Activated T-helper 1 cell treated with anti-CD3 and anti-CD28 coated beads, Interleukin-12 subunit alpha, Interleukin-12 subunit beta, Interleukin-2, Interleukin-4 antibody, amounts not matched to agents 30 ng/mL and 10 ng/mL and 1 ng/mL, durations not matched to agents 14 hours and 24 hours and 36 hours (primary cell): ENCODE measurements at regions of chr6 and their contacts with region 1.

Region 1: GRCh38 chr6:31958741-31959739 is at the starts of genes NELFE and SKIC2:
- DNase-seq: peak; percentile 99
- H3K4me3 Mint-ChIP-seq: peak within 1 kb of the TSS; percentile 98
- H3K27ac Mint-ChIP-seq: peak within 1 kb of the TSS; percentile 98
- H3K4me1 Mint-ChIP-seq: peaks cover 46% of the 10 kb centered on the region
- H3K27me3 Mint-ChIP-seq: no peaks in the 10 kb centered on the region
- total RNA-seq, gene NELFE: 92.3 and 97.7 TPM in 2 replicates
- total RNA-seq, gene SKIC2: 85.8 and 101 TPM in 2 replicates

Region 2: DNA sequence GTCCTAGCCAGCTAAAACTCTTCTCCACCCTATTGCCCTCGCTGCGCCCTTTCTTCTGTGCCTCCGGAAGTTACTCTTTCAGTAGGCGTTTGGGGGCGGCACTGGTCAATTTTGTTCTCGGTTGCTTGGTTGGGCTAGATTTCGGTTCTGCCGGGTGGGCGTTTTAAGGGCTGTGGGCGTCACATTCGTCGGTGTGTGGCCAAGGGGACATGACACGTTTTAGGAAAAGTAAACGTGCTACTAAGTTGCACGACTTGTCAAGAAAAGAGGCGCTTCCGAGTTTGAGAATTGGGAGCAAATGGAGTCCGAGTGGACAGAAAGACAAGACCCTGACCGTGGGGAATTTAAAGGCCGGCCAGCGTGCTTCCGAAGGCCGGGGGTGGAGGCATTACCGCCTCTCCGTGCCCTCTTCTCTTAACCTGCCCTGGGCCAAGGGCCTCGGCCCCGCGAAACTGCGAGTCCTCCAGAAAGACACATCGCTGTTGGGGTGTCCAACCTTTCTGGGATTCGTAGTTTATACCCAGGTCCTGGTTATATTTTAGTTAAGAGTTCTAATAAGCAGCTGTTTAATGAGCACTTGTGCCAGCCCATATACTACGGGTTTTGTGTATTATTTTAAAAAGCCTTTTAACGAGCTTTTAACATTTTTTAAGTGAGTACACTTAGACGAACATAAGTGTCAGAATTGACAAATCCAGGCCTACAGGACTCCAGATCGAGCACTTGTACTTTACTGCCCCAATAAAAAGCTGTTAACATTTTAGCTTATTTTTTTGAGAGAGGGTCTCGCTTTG is 305.9 kb before region 1 on chr6:
- intact Hi-C with region 1: loop called (anchors 1 kb)
- DNase-seq: peak; percentile 81
- H3K4me3 Mint-ChIP-seq: peak overlapping the region; percentile 93
- H3K27ac Mint-ChIP-seq: peak overlapping the region; percentile 100
- H3K4me1 Mint-ChIP-seq: peaks cover 48% of the 10 kb centered on the region
- H3K27me3 Mint-ChIP-seq: no peaks in the 10 kb centered on the region

Region 3: DNA sequence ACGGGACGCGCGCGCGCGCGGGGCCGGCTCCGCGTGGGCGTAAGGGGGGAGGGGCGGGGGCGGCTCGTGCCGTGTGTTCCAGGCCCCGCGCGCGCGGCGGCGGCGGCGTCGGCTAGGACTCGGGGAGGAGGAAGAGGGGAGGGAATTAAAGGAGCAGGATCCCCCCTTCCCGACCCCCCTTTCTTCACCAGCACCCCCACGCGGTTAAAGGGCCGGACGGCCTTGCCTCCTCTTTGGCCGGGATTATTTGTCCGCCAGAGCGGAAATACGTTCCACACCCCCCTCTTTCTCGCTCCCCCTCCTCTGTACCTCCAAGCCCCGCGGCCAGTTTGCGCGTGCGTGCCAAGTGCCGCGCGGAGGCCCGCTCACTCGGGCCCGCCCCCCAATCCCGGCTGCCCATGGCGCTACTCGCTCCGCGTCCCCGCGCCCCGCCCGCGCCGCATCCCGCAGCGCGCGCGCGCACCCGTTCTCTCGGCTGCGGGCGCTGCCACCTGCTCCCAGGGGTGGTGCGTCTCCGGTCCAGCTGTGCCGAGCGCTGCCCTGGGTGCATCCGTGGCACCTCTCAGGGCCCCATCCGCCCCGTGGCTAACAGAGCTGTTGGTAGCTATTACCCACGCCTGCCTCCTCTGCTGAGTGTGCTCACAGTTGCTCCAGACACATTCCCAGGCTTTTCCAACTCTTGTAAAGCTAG is 56.9 kb before region 1 on chr6 and contains the start of gene ZBTB12:
- intact Hi-C with region 1: loop called (anchors 1 kb)
- DNase-seq: peak; percentile 82
- H3K4me3 Mint-ChIP-seq: peak within 1 kb of the TSS; percentile 81
- H3K27ac Mint-ChIP-seq: peak within 1 kb of the TSS; percentile 88
- H3K4me1 Mint-ChIP-seq: peaks cover 37% of the 10 kb centered on the region
- H3K27me3 Mint-ChIP-seq: no peaks in the 10 kb centered on the region
- total RNA-seq, gene ZBTB12: 4.6 and 5.1 TPM in 2 replicates

Region 4: GRCh38 chr6:32127717-32128592 is 168.9 kb after region 1 on chr6 and contains the start of gene ATF6B:
- intact Hi-C with region 1: loop called (anchors 1 kb)
- DNase-seq: peak; percentile 95
- H3K4me3 Mint-ChIP-seq: peak within 1 kb of the TSS; percentile 99
- H3K27ac Mint-ChIP-seq: peak within 1 kb of the TSS; percentile 94
- H3K4me1 Mint-ChIP-seq: peaks cover 45% of the 10 kb centered on the region
- H3K27me3 Mint-ChIP-seq: peaks cover 2% of the 10 kb centered on the region
- total RNA-seq, gene ATF6B: 80.1 and 97.6 TPM in 2 replicates